ENCODE measurements at regions of chr18 and their contacts with region 1.

Region 1: DNA sequence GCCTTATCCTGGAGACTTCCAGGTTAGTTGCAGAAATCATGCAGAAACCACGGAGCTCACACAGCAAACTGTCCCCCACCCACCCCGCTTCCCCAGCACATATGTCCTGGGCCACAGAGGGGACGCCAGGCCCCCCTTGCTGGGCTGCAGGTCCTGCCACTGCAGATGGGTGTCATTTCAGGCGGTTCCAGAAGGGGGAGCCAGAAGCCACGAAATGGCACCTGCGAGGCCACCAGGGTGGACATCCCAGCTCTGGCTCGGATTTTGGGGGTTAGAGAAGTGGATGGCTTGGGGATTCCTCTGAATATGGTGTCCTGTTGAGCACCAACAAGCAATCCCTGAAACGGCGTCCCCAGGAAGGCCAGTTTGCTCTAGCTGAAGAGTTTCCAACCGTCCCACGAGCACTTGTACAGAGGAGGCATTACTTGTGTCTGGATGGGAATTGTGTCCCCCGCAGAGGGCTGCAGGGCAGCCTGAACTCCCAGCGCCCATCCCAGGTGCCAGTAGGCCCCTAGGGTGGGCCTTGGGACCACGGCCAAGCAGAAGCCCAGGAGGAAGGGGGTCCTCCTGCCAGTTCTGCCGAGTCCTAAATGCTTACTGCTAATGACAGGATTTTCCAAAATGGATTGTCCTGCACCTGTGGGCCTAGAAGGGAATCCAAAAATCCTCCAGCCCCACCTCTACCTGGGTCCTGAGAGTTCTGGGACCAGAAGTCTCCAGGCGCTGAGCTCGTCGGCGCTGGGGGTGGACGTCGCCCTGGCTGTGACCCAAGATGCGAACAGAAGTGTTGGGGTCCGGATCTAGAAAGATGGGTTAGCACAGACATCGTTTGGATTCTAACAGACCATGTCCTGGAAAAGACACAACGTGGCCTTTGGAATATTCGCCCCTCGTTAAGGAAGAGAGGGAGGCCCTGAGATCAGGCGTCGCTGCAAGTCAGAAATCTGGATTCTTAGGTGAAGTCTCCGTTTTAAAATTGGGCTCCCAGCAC is 14.6 kb upstream of the NFATC1 start:
- DNase-seq: peak; percentile 81
- ATAC-seq: peak; percentile 61
- H3K4me3 ChIP-seq: no peak overlapping the region
- H3K27ac ChIP-seq: no peak overlapping the region
- H3K4me1 ChIP-seq: peaks cover 3% of the 10 kb centered on the region
- H3K27me3 ChIP-seq: peaks cover 5% of the 10 kb centered on the region
- CTCF ChIP-seq: peak; percentile 83

Region 2: DNA sequence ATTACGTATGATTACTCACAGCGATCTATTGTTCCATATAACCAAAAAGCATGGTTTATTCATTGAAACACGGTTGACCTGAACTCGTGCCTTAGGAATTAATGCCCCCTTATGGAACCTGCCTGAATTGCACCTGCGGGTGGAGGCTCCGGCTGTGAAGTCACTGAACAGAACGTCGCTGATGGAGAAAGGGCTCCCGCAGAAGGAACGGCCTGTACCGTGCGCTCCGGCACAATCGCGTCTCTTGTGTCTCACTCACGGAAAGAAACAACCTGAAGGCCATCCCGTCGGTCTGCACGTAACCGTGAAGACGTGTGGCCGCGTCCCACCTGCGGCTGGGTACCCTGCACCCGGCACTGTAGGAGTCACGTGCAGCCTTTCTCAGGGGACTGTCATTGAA is 147.7 kb after region 1 on chr18:
- intact Hi-C with region 1: loop called (anchors 5 kb)
- DNase-seq: peak; percentile 61
- ATAC-seq: peak; percentile 59
- H3K4me3 ChIP-seq: no peak overlapping the region
- H3K27ac ChIP-seq: no peak overlapping the region
- H3K4me1 ChIP-seq: peaks cover 8% of the 10 kb centered on the region
- H3K27me3 ChIP-seq: no peaks in the 10 kb centered on the region
- CTCF ChIP-seq: peak; percentile 88

Region 3: DNA sequence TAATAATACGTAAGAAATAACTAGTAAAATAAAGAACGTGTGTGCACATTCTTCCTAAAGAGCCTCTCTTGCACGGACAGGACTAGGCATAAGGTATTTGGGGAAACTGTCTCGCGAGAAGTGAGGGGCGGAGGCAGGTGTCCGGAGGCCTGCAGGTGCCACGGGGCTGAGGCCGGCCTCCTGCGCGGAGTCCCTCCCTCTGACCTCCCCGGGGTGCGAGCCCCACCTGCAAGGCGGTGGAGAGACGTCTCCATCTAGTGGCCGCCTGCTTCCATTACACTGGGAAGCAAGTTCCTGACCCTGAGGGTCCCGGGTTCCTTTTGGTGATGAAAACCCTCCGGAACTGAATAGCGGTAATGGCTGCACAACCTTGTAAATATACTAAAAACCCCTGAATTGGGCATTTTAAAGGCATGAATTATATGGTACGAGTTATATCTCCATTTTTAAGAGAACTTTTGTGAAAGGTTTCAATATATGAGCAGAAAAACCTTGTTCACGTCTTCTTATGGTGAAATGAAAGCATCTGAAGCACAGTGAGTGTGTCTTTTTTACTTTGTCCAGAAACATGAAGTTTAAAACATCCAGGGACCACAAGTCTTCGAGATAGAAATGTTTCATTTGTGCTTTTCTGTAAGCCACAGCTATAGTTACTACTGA is 263.0 kb after region 1 on chr18:
- intact Hi-C with region 1: loop called (anchors 2 kb)
- DNase-seq: peak; percentile 79
- ATAC-seq: peak; percentile 93
- H3K4me3 ChIP-seq: no peak overlapping the region
- H3K27ac ChIP-seq: no peak overlapping the region
- H3K4me1 ChIP-seq: peaks cover 8% of the 10 kb centered on the region
- H3K27me3 ChIP-seq: peaks cover 6% of the 10 kb centered on the region
- CTCF ChIP-seq: peak; percentile 98